Activated CD4-positive, alpha-beta memory T cell treated with anti-CD3 and anti-CD28 coated beads for 36 hours (primary cell): ENCODE measurements at regions of chr14 and their contacts with region 1.

Region 1: GRCh38 chr14:95495538-95496025 is 20.9 kb downstream of the SYNE3 start:
- DNase-seq: peak; percentile 64
- H3K4me3 Mint-ChIP-seq: peak overlapping the region; percentile 46
- H3K27ac Mint-ChIP-seq: peak overlapping the region; percentile 75
- H3K4me1 Mint-ChIP-seq: peaks cover 65% of the 10 kb centered on the region
- H3K27me3 Mint-ChIP-seq: no peaks in the 10 kb centered on the region

Region 2: DNA sequence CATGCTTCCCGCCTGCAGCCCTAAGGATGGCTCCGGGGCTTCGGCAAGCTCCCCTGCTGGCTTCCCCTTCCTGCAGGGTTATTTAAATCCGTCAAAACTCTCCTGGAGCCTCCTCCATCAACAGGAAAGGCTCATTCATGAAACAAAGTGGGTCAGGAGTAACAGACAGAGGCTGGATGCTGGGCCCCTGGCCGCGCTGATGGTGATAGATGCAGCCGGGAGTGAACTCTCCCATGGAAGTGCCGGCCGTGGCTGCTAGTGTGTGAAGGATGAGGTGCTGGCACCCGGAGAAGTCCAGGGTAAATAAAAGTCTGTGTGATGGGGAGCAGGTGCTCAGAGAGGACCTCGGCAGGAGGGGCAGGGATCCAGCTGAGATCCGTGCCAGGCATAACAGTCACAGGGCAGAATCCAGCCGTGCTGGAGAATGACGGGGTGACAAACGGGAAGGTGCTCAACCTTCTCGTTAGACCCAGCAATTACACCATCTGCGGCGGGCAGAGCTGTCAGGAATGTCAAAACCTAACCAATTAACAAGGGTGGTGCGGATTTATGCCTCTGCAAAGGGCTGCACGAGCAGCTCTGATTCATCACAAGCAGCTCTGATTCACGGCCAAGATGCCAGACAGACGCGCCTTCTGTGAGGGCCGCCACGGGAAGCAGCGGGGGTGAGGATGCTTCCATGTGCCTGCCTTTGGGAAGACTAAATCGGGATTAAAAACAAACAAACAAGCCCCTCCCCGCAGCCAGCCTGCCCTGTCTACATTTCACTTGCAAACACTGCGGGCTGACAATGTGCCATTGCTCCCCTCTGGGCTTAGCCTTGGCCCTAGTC is 34.7 kb before region 1 on chr14:
- CTCF ChIA-PET with region 1: no interaction called
- POLR2A ChIA-PET with region 1: no interaction called
- intact Hi-C with region 1: no loop called
- DNase-seq: no peak
- H3K4me3 Mint-ChIP-seq: no peak overlapping the region
- H3K27ac Mint-ChIP-seq: peak overlapping the region; percentile 44
- H3K4me1 Mint-ChIP-seq: peaks cover 53% of the 10 kb centered on the region
- H3K27me3 Mint-ChIP-seq: no peaks in the 10 kb centered on the region

Region 3: GRCh38 chr14:95480109-95480886 is 15.3 kb before region 1 on chr14:
- CTCF ChIA-PET with region 1: interaction called, 9 read pairs
- POLR2A ChIA-PET with region 1: interaction called, 3 read pairs
- intact Hi-C with region 1: loop called (anchors 1 kb)
- DNase-seq: peak; percentile 74
- H3K4me3 Mint-ChIP-seq: no peak overlapping the region
- H3K27ac Mint-ChIP-seq: peak overlapping the region; percentile 90
- H3K4me1 Mint-ChIP-seq: peaks cover 44% of the 10 kb centered on the region
- H3K27me3 Mint-ChIP-seq: no peaks in the 10 kb centered on the region

Region 4: DNA sequence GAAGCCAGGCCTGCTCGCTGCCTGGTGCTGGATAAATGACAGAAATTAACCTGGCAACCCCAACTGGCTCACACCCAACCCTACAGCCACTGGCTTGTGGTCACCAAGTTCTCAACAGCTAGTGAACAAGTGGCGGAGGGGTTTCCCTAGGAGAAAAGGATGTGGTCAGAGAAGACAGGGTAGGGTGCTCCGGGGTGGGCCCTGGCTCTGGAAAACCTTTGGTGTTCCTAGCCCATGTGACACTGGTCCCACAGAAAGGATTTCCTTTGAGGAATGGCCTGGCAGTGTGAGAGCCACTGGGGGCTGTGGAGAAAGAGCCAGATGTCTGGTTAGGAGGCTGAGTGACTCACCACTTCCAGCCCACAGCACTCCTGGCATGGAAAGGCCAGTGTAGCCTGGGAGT is 12.1 kb after region 1 on chr14:
- CTCF ChIA-PET with region 1: interaction called, 5 read pairs
- POLR2A ChIA-PET with region 1: interaction called, 9 read pairs
- intact Hi-C with region 1: loop called (anchors 1 kb)
- DNase-seq: peak; percentile 50
- H3K4me3 Mint-ChIP-seq: no peak overlapping the region
- H3K27ac Mint-ChIP-seq: peak overlapping the region; percentile 8
- H3K4me1 Mint-ChIP-seq: peaks cover 78% of the 10 kb centered on the region
- H3K27me3 Mint-ChIP-seq: no peaks in the 10 kb centered on the region

Region 5: DNA sequence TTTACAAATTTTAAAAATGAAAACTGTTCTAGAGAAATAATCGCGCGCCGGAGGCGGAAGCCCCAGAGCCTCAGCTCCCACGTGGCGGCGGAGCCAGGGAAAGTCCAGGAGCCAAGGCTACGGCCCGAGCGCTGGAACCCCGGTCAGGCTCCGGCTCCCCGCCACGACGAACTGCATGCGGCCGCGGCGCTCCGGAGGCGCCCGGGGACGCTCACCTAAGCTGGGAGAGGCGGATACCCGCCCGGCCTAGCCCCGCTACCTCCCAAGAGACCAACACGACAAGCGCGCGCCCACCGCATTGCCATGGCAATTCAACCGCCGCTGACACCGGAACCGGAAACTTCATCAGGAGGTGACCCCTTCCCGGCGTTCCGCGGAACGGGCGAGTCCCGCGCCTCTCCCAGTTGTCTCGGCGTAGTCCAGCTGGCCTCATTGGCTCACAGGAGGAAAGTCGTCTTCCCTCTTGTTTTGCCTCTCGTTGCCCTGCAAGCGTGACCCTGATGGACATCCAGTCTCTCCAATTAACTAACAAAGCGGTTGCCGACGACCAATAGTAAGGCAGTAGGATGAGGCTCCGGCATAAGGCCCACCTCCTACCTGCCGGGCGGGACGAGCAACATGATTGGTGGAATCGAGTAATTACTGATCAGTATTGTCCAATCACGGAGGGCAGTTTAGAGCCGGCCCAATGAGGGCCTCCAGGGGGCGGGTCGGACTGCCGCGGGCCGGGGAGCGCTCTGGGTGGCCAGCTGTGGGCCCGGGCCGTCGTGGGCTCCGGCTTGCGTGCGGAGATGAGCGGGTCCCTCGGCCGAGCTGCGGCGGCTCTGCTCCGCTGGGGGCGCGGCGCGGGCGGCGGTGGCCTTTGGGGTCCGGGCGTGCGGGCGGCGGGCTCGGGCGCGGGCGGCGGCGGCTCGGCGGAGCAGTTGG is 39.0 kb after region 1 on chr14 and contains the start of gene GLRX5:
- CTCF ChIA-PET with region 1: interaction called, 3 read pairs
- POLR2A ChIA-PET with region 1: no interaction called
- intact Hi-C with region 1: loop called (anchors 5 kb)
- DNase-seq: peak; percentile 98
- H3K4me3 Mint-ChIP-seq: peak within 1 kb of the TSS; percentile 93
- H3K27ac Mint-ChIP-seq: peak within 1 kb of the TSS; percentile 93
- H3K4me1 Mint-ChIP-seq: peaks cover 52% of the 10 kb centered on the region
- H3K27me3 Mint-ChIP-seq: no peaks in the 10 kb centered on the region
- total RNA-seq, gene GLRX5: 31.8 to 32.2 TPM